ENCODE measurements at regions of chr1 and their contacts with region 1.

Region 1: DNA sequence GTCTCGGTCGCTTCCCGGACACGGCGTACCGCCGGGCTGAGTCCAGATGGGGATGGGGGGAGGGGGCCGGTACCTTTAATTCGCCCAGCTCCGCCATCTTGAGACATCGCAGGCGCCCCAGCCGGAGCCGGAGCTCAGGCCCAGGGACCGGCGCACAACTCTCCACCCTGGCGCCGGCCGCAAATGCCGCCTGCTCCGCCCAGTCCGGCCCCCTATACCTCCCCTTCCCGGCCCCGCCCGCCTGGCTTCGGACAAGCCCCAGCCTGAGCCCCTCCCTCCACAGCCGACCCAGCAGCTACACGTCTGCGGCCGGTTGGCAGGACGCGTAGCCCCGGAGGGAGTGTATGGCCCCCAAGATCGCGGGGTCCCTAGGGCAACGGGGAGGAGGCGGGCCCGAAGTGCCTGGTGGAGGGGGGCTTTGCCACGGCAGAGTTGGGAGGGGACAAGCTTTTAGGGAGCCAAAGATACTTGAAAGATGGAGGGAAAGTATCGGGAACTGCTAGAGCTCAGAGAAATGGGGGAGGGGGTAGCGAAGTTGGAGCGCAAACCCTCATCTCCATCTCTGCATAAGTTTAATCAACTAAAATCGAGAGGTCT is at the start of gene PIAS3:
- DNase-seq: peak; percentile 65
- ATAC-seq: peak; percentile 93
- H3K4me3 ChIP-seq: peak within 1 kb of the TSS; percentile 82
- H3K27ac ChIP-seq: peak within 1 kb of the TSS; percentile 67
- H3K4me1 ChIP-seq: no peaks in the 10 kb centered on the region
- H3K27me3 ChIP-seq: no peaks in the 10 kb centered on the region
- CTCF ChIP-seq: no peak
- EP300 ChIP-seq: 0 out of 4 replicates have a peak, but pooled peaks of 1 of the 2 experiments have one; percentile 12
- POLR2A ChIP-seq: peak; percentile 68
- RAD21 ChIP-seq: no peak
- polyA plus RNA-seq, gene PIAS3: 0.85 to 1.6 TPM

Region 2: DNA sequence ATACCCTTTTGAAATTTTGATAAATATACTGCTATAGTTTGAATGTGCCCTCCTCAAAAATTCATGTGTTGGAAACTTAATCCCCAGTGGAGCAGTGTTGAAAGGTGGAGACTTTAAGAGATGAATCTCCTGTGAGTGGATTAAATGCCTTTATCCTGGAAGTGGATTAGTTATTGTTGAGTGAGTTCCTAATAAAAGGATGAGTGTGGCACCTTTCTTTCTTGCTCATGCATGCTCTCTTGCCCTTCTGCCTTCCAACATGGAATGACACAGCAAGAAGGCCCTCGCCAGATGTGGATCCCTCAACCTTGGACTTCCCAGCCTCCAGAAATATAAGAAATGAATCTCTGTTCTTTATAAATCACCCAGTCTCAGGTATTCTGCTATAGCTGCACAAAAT is 87.9 kb before region 1 on chr1:
- CTCF ChIA-PET with region 1: no interaction called
- POLR2A ChIA-PET with region 1: no interaction called
- RAD21 ChIA-PET with region 1: no interaction called
- SMC1A ChIA-PET with region 1: no interaction called
- in situ Hi-C with region 1: no loop called
- intact Hi-C with region 1: no loop called
- DNase-seq: no peak
- ATAC-seq: no peak
- H3K4me3 ChIP-seq: no peak overlapping the region
- H3K27ac ChIP-seq: no peak overlapping the region
- H3K4me1 ChIP-seq: no peaks in the 10 kb centered on the region
- H3K27me3 ChIP-seq: no peaks in the 10 kb centered on the region
- CTCF ChIP-seq: no peak
- EP300 ChIP-seq: no peak
- POLR2A ChIP-seq: no peak
- RAD21 ChIP-seq: no peak

Region 3: GRCh38 chr1:145879775-145880174 is 20.8 kb after region 1 on chr1:
- CTCF ChIA-PET with region 1: interaction called, 6 read pairs
- POLR2A ChIA-PET with region 1: interaction called, 4 read pairs
- RAD21 ChIA-PET with region 1: interaction called, 4 read pairs
- SMC1A ChIA-PET with region 1: interaction called, 17 read pairs
- in situ Hi-C with region 1: no loop called
- intact Hi-C with region 1: no loop called
- DNase-seq: no peak
- ATAC-seq: no peak
- H3K4me3 ChIP-seq: no peak overlapping the region
- H3K27ac ChIP-seq: no peak overlapping the region
- H3K4me1 ChIP-seq: no peaks in the 10 kb centered on the region
- H3K27me3 ChIP-seq: peaks cover 2% of the 10 kb centered on the region in 2 experiments; a peak in 2 of 4 replicates
- CTCF ChIP-seq: no peak
- EP300 ChIP-seq: no peak
- POLR2A ChIP-seq: no peak
- RAD21 ChIP-seq: no peak

Region 4: DNA sequence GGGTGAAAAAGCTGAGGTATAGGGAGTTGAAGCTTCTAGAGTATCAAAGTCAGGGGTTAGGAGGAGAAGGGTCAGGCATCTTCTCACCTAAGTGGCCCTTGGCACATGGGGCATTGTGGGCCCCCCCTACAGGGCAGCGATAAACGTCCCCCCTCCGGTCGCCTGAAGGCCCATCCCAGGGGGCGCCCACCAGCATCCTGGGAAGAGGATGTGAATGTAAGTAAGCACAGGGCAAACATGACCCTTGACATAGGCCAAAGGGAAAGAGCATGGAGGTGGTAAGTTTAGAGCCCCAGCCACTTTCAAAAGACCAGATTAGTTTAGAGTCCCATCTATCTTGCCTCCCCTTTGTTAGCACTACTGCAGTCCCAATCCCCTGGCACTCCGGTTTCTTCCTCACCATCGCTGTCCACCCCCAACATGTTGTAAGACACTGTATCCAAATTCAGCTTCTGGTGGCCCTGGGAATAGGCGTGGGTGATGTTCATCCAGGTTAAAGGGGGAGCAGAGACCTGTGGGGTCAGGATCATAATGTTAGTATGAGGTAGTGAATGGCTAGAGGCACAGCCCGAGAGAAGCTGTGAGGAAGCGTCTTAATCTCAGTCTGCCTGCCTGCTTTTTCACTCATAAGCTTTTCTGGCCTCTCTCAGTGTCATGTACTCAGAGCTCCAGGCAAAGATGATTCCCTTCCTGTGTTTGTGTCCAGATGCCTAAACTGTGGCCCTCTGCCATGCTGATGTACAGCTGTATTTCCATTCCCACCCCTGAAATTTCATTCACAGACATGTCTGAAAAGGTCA is 48.2 kb after region 1 on chr1:
- CTCF ChIA-PET with region 1: interaction called, 36 read pairs
- POLR2A ChIA-PET with region 1: interaction called, 9 read pairs
- RAD21 ChIA-PET with region 1: interaction called, 4 read pairs
- SMC1A ChIA-PET with region 1: interaction called, 4 read pairs
- in situ Hi-C with region 1: no loop called
- intact Hi-C with region 1: no loop called
- DNase-seq: no peak
- ATAC-seq: no peak
- H3K4me3 ChIP-seq: no peak overlapping the region
- H3K27ac ChIP-seq: no peak overlapping the region
- H3K4me1 ChIP-seq: peaks cover 2% of the 10 kb centered on the region; the same call in 1 of the 2 replicates
- H3K27me3 ChIP-seq: no peaks in the 10 kb centered on the region
- CTCF ChIP-seq: no peak
- EP300 ChIP-seq: no peak
- POLR2A ChIP-seq: no peak
- RAD21 ChIP-seq: no peak

Region 5: DNA sequence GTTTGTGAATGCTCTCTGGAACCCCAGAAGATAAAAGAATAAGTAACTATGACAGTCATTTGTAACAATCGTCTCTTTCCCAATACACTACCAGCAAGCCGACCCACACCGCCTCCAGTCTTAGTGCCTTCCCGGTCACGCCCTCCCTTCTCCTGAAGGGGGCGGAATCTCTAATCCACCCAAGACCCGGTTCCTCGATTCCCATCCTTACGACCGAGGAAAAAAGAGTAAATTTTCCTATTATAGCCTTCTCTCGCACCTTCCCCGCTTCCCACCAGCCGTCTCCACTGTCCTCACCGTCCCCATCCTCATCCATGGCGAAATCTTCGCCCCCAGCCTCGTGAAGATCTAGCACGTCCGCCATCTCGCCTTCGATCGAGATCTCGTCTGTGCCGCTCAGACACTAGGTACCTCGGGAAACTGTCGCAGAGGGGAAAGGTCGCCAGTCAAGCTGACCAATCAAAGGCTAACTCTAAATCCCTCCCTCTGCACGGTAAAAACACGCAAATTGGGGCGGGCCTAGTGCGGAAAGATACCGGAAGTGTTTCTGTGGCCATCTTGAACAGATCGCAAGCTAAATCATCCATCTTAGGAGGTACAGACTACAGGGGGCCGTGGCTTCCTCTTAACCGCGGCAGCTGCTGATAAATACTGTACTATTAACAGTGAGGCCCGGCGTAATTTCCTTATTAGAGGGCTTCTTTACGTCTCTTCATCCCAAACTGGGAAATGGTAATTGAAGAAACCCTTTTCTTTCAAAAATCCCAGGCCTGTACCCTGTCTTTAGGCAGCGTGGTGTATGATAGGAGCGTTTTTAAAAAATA is 68.3 kb after region 1 on chr1 and contains the start of gene RBM8A:
- CTCF ChIA-PET with region 1: interaction called, 7 read pairs
- POLR2A ChIA-PET with region 1: interaction called, 25 read pairs
- RAD21 ChIA-PET with region 1: interaction called, 10 read pairs
- SMC1A ChIA-PET with region 1: no interaction called
- in situ Hi-C with region 1: no loop called
- intact Hi-C with region 1: no loop called
- DNase-seq: peak; percentile 99
- ATAC-seq: peak; percentile 98
- H3K4me3 ChIP-seq: peak within 1 kb of the TSS; percentile 90
- H3K27ac ChIP-seq: peak within 1 kb of the TSS; percentile 97
- H3K4me1 ChIP-seq: peaks cover 6% of the 10 kb centered on the region; the same call in 1 of the 2 replicates
- H3K27me3 ChIP-seq: no peaks in the 10 kb centered on the region
- CTCF ChIP-seq: peak; percentile 37 to 67 (median 58)
- EP300 ChIP-seq: 0 out of 4 replicates have a peak, but pooled peaks of 1 of the 2 experiments have one; percentile 11
- POLR2A ChIP-seq: peak; percentile 95
- RAD21 ChIP-seq: no peak
- polyA plus RNA-seq, gene RBM8A: 665 to 1,248 TPM

Region 6: DNA sequence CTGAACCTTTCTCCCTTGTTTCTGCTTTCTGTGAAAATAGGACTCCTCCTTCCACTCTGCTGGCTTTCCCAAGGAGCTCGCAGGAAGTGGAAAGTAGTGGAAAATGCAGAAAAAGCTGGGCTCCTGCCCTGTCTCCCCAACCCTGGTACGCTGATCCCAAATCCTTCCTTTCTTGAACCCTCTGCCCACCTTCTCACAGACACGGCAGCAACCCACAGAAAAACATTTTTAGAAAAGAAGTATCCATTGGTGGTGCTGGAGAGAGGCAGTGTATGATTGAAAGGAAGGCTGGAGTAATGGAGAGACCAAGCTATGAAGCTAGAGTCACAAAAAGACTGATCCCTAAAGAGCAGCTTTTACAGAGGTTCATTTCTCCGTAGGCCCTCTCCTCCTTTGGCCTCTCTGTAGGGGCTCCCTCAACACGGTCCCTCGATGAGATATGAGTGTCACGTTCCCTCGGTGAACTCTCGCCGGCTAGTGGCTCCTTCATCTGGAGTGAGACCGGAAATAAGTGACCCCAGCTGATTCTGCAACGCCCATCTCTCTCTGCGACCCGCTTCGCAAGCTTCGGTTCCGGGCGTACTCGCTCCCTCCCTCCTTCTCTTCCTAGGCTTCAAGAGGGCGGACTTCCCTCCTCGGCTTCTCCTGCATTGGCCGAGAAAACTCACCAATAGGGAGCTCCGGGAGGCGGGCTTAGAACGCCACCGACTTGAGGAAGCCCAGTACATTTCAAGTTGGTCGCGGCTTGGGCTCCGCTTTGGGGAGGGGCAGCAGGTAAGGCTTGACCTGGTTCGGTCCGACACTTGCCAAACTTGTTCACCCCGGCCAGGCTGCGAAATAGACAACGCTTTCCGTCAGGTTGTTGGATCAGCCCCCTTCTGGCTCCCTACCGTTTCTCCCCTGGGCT is 105.3 kb after region 1 on chr1 and contains the starts of genes ANKRD34A and POLR3GL:
- CTCF ChIA-PET with region 1: interaction called, 8 read pairs
- POLR2A ChIA-PET with region 1: interaction called, 14 read pairs
- RAD21 ChIA-PET with region 1: interaction called, 17 read pairs
- SMC1A ChIA-PET with region 1: interaction called, 7 read pairs
- in situ Hi-C with region 1: no loop called
- intact Hi-C with region 1: no loop called
- DNase-seq: peak; percentile 80
- ATAC-seq: peak; percentile 95
- H3K4me3 ChIP-seq: peak within 1 kb of the TSS; percentile 79
- H3K27ac ChIP-seq: peak within 1 kb of the TSS; percentile 73
- H3K4me1 ChIP-seq: peaks cover 19% of the 10 kb centered on the region
- H3K27me3 ChIP-seq: no peaks in the 10 kb centered on the region; a peak in 1 of 4 replicates
- CTCF ChIP-seq: no peak
- EP300 ChIP-seq: no peak
- POLR2A ChIP-seq: peak; percentile 98
- RAD21 ChIP-seq: no peak
- polyA plus RNA-seq, gene ANKRD34A: 0.40 to 0.42 TPM
- polyA plus RNA-seq, gene POLR3GL: 12.8 to 25.5 TPM